Thyroid gland (tissue), 4 donors: ENCODE measurements at regions of chrX and their contacts with region 1.

Region 1: GRCh38 chrX:139304500-139304899 is 226.0 kb upstream of the F9 start:
- DNase-seq: no peak
- H3K4me3 ChIP-seq: no peak overlapping the region
- H3K27ac ChIP-seq: no peak overlapping the region
- H3K4me1 ChIP-seq: no peaks in the 10 kb centered on the region
- H3K27me3 ChIP-seq: no peaks in the 10 kb centered on the region
- CTCF ChIP-seq: no peak
- POLR2A ChIP-seq: no peak

Region 2: DNA sequence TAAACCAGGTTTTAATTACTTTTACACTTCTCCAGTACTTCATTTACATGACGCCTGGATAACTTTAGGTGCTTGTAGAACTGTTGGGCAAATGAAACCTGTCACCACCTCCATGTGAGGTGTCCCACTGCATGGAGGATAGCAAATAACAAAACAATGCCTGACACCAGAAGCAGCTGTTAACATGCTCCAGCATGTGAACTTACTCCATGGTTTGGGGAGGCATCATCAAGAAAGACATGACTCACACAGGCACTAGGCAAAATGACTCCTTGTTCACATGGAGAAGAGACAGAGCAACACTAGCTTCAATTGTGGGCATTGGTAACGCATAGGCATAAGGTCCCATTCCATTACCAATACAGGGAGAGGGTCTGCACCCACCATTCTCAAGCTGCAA is 27.9 kb after region 1 on chrX:
- intact Hi-C with region 1: loop called (anchors 2 kb)
- DNase-seq: no peak
- H3K4me3 ChIP-seq: no peak overlapping the region
- H3K27ac ChIP-seq: no peak overlapping the region
- H3K4me1 ChIP-seq: no peaks in the 10 kb centered on the region
- H3K27me3 ChIP-seq: no peaks in the 10 kb centered on the region
- CTCF ChIP-seq: no peak
- POLR2A ChIP-seq: no peak

Region 3: DNA sequence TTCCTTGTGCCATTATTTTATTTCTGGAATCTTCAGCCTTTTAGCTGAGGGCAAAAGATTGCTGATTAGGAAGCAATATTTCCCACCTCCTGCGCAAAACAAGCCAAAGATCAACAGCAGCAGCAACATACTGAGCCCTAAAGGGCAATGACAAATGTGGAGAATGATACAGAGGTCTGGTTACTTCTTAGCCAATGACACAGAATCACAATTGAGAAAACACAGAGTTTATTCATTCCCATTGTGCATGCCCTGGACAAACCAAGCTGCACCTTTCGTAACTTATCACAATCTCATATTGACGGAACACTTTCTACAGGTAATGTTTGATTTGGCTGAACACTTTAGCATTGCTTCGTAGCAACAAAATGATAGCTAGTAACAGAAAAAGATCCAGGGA is 239.4 kb after region 1 on chrX:
- intact Hi-C with region 1: no loop called
- DNase-seq: no peak
- H3K4me3 ChIP-seq: no peak overlapping the region
- H3K27ac ChIP-seq: no peak overlapping the region
- H3K4me1 ChIP-seq: no peaks in the 10 kb centered on the region
- H3K27me3 ChIP-seq: no peaks in the 10 kb centered on the region
- CTCF ChIP-seq: no peak
- POLR2A ChIP-seq: no peak